HepG2 (cell line): ENCODE measurements at regions of chr9 and their contacts with region 1.

Region 1: DNA sequence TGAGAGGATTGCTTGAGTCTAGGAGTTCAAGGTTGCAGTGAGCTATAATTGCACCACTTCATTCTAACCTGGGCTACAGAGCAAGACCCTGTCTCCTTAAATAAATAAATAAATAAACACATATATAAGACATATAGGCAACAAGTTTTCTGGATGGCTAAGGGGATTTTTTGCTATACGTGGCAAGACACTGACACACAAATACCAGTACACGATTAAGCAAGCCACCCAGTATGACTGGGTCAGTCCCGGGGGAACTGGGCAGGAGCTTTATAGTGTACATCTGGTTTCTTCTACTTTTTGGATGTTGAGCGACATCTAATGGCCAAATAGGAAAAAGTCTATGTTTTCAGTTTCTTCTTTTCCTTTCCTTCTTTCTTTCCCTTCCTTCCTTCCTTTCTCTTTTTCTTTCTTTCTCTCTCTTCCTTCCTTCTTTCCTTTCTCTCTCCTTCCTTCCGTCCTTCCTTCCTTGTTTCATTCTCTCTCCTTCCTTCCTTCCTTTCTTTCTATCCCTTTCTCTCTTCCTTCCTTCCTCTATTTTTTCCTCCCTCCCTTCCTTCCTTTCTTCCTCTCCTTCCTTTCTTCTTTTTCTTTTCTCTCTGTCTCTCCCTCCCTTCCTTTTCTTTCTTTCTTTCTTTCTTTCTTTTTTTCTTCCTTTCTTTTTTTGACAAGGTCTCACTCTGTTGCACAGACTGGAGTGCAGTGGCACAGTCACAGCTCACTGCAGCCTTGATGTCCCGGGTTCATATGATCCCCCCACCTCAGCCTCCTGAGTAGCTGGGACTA is 47.0 kb upstream of the PLIN2 start:
- DNase-seq: peak; percentile 79
- ATAC-seq: peak; percentile 93
- H3K4me3 ChIP-seq: peak overlapping the region in 1 of 3 experiments; percentile 27; a peak in 2 of 6 replicates
- H3K27ac ChIP-seq: peak overlapping the region; percentile 49
- H3K4me1 ChIP-seq: peaks cover 45% of the 10 kb centered on the region
- H3K27me3 ChIP-seq: no peaks in the 10 kb centered on the region
- CTCF ChIP-seq: peak; percentile 76
- EP300 ChIP-seq: no peak
- POLR2A ChIP-seq: no peak
- RAD21 ChIP-seq: peak; percentile 79

Region 2: DNA sequence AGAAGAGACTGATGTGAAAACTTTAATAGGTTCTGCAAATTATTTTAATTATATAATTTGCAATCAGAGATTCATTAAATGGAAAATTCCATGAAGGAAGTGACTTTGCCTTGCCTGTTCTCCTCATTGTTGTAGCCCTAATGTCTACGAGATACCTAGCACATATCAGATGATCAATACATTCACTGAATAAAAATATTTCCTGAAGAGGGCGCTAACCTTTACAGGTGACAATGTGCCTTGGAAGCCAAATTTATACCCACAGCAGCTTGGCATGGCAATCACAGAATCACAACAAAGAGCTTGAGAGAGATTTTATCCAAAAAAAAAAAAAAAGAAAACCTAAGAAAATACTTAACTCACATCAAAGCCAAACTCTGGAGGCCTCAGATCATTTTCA is 89.0 kb before region 1 on chr9:
- CTCF ChIA-PET with region 1: interaction called, 20 read pairs
- POLR2A ChIA-PET with region 1: interaction called, 4 read pairs
- in situ Hi-C with region 1: no loop called
- intact Hi-C with region 1: loop called (anchors 1 kb)
- DNase-seq: peak; percentile 35
- ATAC-seq: peak; percentile 65
- H3K4me3 ChIP-seq: no peak overlapping the region
- H3K27ac ChIP-seq: no peak overlapping the region
- H3K4me1 ChIP-seq: peaks cover 13% of the 10 kb centered on the region
- H3K27me3 ChIP-seq: no peaks in the 10 kb centered on the region
- CTCF ChIP-seq: peak; percentile 51
- EP300 ChIP-seq: no peak
- POLR2A ChIP-seq: no peak
- RAD21 ChIP-seq: no peak

Region 3: GRCh38 chr9:19102631-19103345 is 71.5 kb before region 1 on chr9 and contains the start of gene HAUS6:
- CTCF ChIA-PET with region 1: no interaction called
- POLR2A ChIA-PET with region 1: no interaction called
- in situ Hi-C with region 1: no loop called
- intact Hi-C with region 1: loop called (anchors 5 kb)
- DNase-seq: peak; percentile 93
- ATAC-seq: peak; percentile 99
- H3K4me3 ChIP-seq: peak within 1 kb of the TSS; percentile 80 to 96 (median 81)
- H3K27ac ChIP-seq: peak within 1 kb of the TSS; percentile 72
- H3K4me1 ChIP-seq: peaks cover 41% of the 10 kb centered on the region
- H3K27me3 ChIP-seq: no peaks in the 10 kb centered on the region; a peak in 1 of 5 replicates
- CTCF ChIP-seq: peak; percentile 41
- EP300 ChIP-seq: no peak
- POLR2A ChIP-seq: peak; percentile 75 to 80; a peak in 3 of 4 replicates
- RAD21 ChIP-seq: no peak; the same call in 1 of the 2 replicates
- total RNA-seq, gene HAUS6: 31.1 and 51.3 TPM in 2 replicates

Region 4: GRCh38 chr9:19127881-19128500 is 46.3 kb before region 1 on chr9:
- CTCF ChIA-PET with region 1: no interaction called
- POLR2A ChIA-PET with region 1: interaction called, 6 read pairs
- in situ Hi-C with region 1: loop called (anchors 5 kb)
- intact Hi-C with region 1: no loop called
- DNase-seq: no peak
- ATAC-seq: peak; percentile 7
- H3K4me3 ChIP-seq: peak overlapping the region; percentile 73 to 89 (median 81); a peak in 4 of 6 replicates
- H3K27ac ChIP-seq: peak overlapping the region; percentile 92
- H3K4me1 ChIP-seq: peaks cover 81% of the 10 kb centered on the region
- H3K27me3 ChIP-seq: peaks cover 0 to 5% of the 10 kb centered on the region in 2 experiments; a peak in 1 of 5 replicates
- CTCF ChIP-seq: no peak
- EP300 ChIP-seq: no peak
- POLR2A ChIP-seq: no peak
- RAD21 ChIP-seq: no peak

Region 5: DNA sequence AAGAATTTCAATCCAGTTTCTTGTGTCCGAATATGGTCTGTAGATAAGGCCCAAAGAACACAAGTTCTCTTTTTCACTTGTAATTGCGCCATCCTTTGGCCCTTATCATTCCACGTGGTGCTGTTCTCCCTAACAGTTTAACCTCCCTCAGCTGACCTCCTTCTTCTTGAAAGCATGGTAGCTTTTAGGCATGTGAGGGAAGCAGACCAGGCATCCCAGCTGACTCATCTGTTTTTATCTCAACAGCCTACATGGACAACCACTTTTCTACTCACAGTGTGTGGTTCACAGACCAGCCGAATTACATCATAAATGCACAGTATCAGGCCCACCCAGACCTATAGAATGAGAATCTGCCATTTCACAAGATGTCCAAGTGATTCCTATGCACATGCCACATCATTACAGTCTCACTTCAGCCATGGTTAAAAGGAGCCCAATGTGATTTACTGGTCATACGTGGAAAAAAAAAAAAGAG is 20.1 kb before region 1 on chr9:
- CTCF ChIA-PET with region 1: no interaction called
- POLR2A ChIA-PET with region 1: interaction called, 9 read pairs
- in situ Hi-C with region 1: no loop called
- intact Hi-C with region 1: loop called (anchors 1 kb)
- DNase-seq: peak; percentile 92
- ATAC-seq: no peak; the same call in 2 of the 3 replicates
- H3K4me3 ChIP-seq: no peak overlapping the region; a peak in 1 of 6 replicates
- H3K27ac ChIP-seq: peak overlapping the region; percentile 83
- H3K4me1 ChIP-seq: peaks cover 98% of the 10 kb centered on the region
- H3K27me3 ChIP-seq: no peaks in the 10 kb centered on the region
- CTCF ChIP-seq: peak; percentile 34; the same call in 1 of the 2 replicates
- EP300 ChIP-seq: peak in 1 of 2 experiments; percentile 94; a peak in 2 of 4 replicates
- POLR2A ChIP-seq: no peak
- RAD21 ChIP-seq: no peak

Region 6: GRCh38 chr9:19161257-19162025 is 12.9 kb before region 1 on chr9:
- CTCF ChIA-PET with region 1: no interaction called
- POLR2A ChIA-PET with region 1: interaction called, 10 read pairs
- in situ Hi-C with region 1: no loop called
- intact Hi-C with region 1: loop called (anchors 1 kb)
- DNase-seq: peak; percentile 100
- ATAC-seq: peak; percentile 88
- H3K4me3 ChIP-seq: peak overlapping the region in 1 of 3 experiments; percentile 18; a peak in 1 of 6 replicates
- H3K27ac ChIP-seq: peak overlapping the region; percentile 99
- H3K4me1 ChIP-seq: peaks cover 90% of the 10 kb centered on the region
- H3K27me3 ChIP-seq: no peaks in the 10 kb centered on the region
- CTCF ChIP-seq: no peak
- EP300 ChIP-seq: peak; percentile 99
- POLR2A ChIP-seq: peak; percentile 46 to 56; a peak in 3 of 4 replicates
- RAD21 ChIP-seq: peak; percentile 43